Caco-2 (cell line): ENCODE measurements at regions of chr4 and their contacts with region 1.

Region 1: DNA sequence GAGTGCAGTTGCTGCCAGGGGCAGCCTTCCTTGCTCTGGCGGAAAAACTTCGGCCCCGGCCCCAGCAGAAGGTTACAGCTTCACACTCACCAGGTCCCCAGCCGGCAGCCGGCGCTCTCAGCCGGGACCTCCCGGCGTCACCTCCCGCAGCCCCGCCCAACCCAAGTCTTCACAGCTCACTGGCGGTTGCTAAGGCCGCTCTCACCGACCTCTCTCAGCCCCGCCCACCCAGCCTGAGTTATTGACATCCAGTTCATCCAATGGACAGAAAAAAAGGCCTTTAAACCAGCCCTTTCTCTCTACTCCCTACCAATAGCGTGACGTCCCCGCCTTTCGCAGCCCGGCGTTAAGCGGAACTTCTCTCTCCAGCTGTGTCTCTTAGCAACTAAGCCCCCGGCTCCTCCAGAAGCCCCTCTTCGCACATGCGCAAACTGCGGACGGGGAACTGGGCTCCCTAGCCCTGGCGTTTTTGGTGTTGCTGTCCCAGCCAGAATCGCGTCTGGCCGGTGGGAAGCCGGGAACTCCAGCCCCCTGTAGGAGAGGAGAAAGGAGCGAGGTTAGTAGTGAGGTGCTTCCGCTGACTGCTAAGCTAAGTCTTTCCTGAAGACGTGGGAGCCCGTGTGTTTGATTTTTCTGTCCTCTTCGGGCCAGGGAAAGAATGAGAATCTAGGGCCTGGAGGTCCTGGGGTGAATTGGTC is at the start of gene BBS12:
- DNase-seq: peak; percentile 98 to 99
- H3K4me3 ChIP-seq: peak within 1 kb of the TSS; percentile 54
- H3K4me3 Mint-ChIP-seq: peak within 1 kb of the TSS; percentile 85
- H3K27ac Mint-ChIP-seq: peak within 1 kb of the TSS; percentile 92
- H3K4me1 ChIP-seq: 0 out of 2 replicates have a peak, but pooled peaks cover 4% of the 10 kb centered on the region
- H3K4me1 Mint-ChIP-seq: no peaks in the 10 kb centered on the region
- H3K27me3 ChIP-seq: no peaks in the 10 kb centered on the region
- H3K27me3 Mint-ChIP-seq: no peaks in the 10 kb centered on the region
- CTCF ChIP-seq: peak in 1 of 2 experiments; percentile 55
- total RNA-seq, gene BBS12: 2.6 and 2.7 TPM in 2 replicates

Region 2: DNA sequence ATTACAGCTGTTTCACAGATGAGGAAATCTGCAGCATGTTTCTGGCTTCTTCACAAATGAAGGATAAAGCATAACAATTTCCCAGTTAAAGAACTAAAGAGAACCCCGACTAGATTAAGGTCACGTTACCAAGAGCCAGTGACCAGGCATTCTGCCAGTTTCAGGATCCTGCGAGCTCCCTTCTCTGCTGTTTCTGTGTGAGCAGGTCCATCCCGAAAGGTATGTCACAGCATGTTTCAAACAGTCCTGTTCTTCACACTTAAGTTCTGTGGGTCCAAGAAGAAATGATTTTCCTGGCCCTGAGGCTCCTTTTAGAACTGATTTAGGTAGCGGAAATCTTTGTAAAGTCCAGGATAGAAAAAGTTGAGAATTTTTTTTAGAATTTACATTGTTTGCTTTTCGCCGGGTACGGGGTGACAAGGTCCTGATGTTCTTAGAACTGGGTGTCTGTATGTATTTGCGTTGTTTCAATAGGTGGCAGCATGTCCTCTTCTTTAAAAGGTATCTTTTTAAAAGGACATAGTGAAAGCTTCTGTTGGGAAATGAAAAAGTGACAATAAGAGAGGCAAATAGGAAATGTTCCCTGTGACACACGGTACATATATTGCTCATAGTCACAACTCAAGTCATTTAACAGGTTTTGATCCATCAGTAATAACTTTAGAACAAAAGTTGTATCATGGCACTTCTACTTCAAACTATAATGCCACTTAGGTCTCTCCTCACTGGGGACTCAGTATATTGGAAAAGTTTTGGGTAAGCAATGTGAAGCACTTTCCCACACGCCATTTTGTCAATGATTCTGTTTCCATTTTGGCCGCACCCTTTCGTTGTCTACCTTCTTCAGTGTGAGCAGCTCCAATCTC is 130.0 kb before region 1 on chr4:
- CTCF ChIA-PET with region 1: interaction called, 6 read pairs
- POLR2A ChIA-PET with region 1: no interaction called
- intact Hi-C with region 1: loop called (anchors 5 kb)
- DNase-seq: peak in 1 of 2 experiments; percentile 42
- H3K4me3 ChIP-seq: no peak overlapping the region
- H3K4me3 Mint-ChIP-seq: peak overlapping the region; percentile 20
- H3K27ac Mint-ChIP-seq: no peak overlapping the region
- H3K4me1 ChIP-seq: peaks cover 11% of the 10 kb centered on the region; the same call in 1 of the 2 replicates
- H3K4me1 Mint-ChIP-seq: peaks cover 11% of the 10 kb centered on the region
- H3K27me3 ChIP-seq: no peaks in the 10 kb centered on the region
- H3K27me3 Mint-ChIP-seq: peaks cover 17% of the 10 kb centered on the region
- CTCF ChIP-seq: peak; percentile 33 to 40

Region 3: DNA sequence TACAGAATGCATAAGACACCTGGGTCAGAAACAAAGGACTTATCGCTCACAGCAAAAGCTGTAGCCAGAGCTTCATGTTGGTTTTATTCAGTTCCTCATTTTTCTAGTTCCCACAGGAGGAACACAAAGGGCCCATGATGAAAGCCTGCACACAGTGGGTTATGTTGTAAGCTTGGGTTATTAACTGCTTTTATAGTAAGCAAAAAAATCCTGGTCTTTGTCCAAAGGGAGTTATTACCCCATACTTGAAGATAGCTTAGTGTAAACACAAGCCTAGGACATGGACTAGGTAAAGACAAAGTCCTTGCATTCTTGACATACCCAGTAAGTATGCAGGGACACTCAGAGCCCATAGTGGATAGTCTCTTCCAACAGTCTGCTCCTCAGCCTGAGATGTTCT is 11.8 kb after region 1 on chr4:
- CTCF ChIA-PET with region 1: interaction called, 22 read pairs
- POLR2A ChIA-PET with region 1: interaction called, 15 read pairs
- intact Hi-C with region 1: loop called (anchors 1 kb)
- DNase-seq: peak; percentile 75 to 78
- H3K4me3 ChIP-seq: no peak overlapping the region
- H3K4me3 Mint-ChIP-seq: peak overlapping the region; percentile 27
- H3K27ac Mint-ChIP-seq: peak overlapping the region; percentile 80
- H3K4me1 ChIP-seq: peaks cover 35% of the 10 kb centered on the region
- H3K4me1 Mint-ChIP-seq: peaks cover 10% of the 10 kb centered on the region
- H3K27me3 ChIP-seq: no peaks in the 10 kb centered on the region
- H3K27me3 Mint-ChIP-seq: no peaks in the 10 kb centered on the region
- CTCF ChIP-seq: no peak

Region 4: DNA sequence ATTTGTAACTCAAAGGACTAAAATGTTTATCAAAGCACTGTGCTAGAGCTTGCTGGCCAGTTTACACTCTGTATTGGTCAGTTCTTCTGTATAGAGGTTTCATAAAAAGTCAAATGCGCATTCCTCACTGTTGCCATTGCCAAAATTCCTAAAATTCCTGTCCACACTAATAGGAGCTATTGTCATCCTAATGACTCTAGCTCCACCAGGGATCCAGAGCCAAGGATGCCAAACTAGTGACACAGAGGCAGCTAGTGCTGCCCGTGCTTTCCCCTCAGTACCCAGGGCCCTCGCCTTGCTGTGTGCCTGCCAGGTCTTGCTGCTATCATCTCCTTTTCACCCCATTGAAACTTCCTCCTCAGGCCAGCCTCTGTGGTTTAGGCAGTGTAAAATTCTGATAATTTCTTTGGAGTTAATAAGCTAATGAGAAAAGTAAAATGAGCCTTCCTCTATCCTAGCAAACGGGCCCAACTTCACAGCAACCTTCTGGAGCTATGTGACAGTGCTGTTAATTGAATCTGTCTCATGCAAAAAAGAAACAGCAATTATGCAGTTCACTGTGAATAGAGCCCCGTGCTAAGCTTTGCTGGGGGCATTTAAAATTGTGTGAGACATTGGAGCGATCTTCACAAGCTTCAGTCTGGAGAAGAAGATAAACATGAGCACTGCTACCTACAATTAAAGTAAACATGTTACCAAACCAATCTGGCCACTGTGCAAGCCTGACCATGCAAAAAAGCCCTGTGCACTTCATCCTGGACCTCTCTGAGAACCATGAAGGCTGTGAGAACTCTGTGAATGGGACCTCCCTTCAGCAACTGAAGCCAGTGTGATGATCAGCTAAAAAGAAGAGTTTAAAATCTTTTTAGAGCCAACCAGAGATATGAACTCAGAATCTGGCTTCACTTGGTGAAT is 51.1 kb after region 1 on chr4:
- CTCF ChIA-PET with region 1: interaction called, 3 read pairs
- POLR2A ChIA-PET with region 1: no interaction called
- intact Hi-C with region 1: loop called (anchors 5 kb)
- DNase-seq: peak; percentile 20 to 43
- H3K4me3 ChIP-seq: no peak overlapping the region
- H3K4me3 Mint-ChIP-seq: no peak overlapping the region
- H3K27ac Mint-ChIP-seq: peak overlapping the region; percentile 45
- H3K4me1 ChIP-seq: 0 out of 2 replicates have a peak, but pooled peaks cover 12% of the 10 kb centered on the region
- H3K4me1 Mint-ChIP-seq: peaks cover 10% of the 10 kb centered on the region
- H3K27me3 ChIP-seq: no peaks in the 10 kb centered on the region
- H3K27me3 Mint-ChIP-seq: no peaks in the 10 kb centered on the region
- CTCF ChIP-seq: no peak

Region 5: GRCh38 chr4:122922877-122923511 is 190.5 kb after region 1 on chr4:
- CTCF ChIA-PET with region 1: interaction called, 6 read pairs
- POLR2A ChIA-PET with region 1: interaction called, 4 read pairs
- intact Hi-C with region 1: loop called (anchors 2 kb)
- DNase-seq: peak; percentile 80 to 81
- H3K4me3 ChIP-seq: peak overlapping the region; percentile 66
- H3K4me3 Mint-ChIP-seq: no peak overlapping the region
- H3K27ac Mint-ChIP-seq: peak overlapping the region; percentile 79
- H3K4me1 ChIP-seq: no peaks in the 10 kb centered on the region
- H3K4me1 Mint-ChIP-seq: no peaks in the 10 kb centered on the region
- H3K27me3 ChIP-seq: no peaks in the 10 kb centered on the region
- H3K27me3 Mint-ChIP-seq: no peaks in the 10 kb centered on the region
- CTCF ChIP-seq: no peak